AG04450 (cell line): ENCODE measurements at regions of chr7 and their contacts with region 1.

Region 1: GRCh38 chr7:110568932-110569331 is 522.0 kb upstream of the LRRN3 start:
- DNase-seq: no peak
- H3K4me3 ChIP-seq: no peak overlapping the region
- H3K27ac ChIP-seq: no peak overlapping the region
- H3K27me3 ChIP-seq: no peaks in the 10 kb centered on the region
- CTCF ChIP-seq: no peak

Region 2: GRCh38 chr7:110502888-110503465 is 66.0 kb before region 1 on chr7:
- CTCF ChIA-PET with region 1: interaction called, 11 read pairs
- POLR2A ChIA-PET with region 1: no interaction called
- DNase-seq: peak; percentile 24
- H3K4me3 ChIP-seq: no peak overlapping the region
- H3K27ac ChIP-seq: no peak overlapping the region
- H3K27me3 ChIP-seq: no peaks in the 10 kb centered on the region
- CTCF ChIP-seq: no peak